ENCODE measurements at regions of chr12 and their contacts with region 1.

Region 1: GRCh38 chr12:14884458-14884878 is 1.2 kb downstream of the MGP start:
- DNase-seq: peak; percentile 65 to 92 (median 85)
- ATAC-seq: peak; percentile 91 to 98 (median 97)
- H3K4me3 ChIP-seq: no peak overlapping the region
- H3K4me3 Mint-ChIP-seq: peak overlapping the region; percentile 46 to 67 (median 57)
- H3K27ac ChIP-seq: no peak overlapping the region
- H3K27ac Mint-ChIP-seq: peak overlapping the region; percentile 41 to 69
- H3K4me1 ChIP-seq: peaks cover 12 to 14% of the 10 kb centered on the region in 2 experiments
- H3K4me1 Mint-ChIP-seq: peaks cover 46 to 52% (median 50%) of the 10 kb centered on the region in 3 donors
- H3K27me3 ChIP-seq: peaks cover 0 to 3% of the 10 kb centered on the region in 2 experiments
- H3K27me3 Mint-ChIP-seq: peaks cover 0 to 14% of the 10 kb centered on the region in 2 donors

Region 2: GRCh38 chr12:14537088-14537487 is 347.4 kb before region 1 on chr12:
- CTCF ChIA-PET with region 1: no interaction called
- POLR2A ChIA-PET with region 1: interaction called in 1 of 2 experiments, 11 read pairs
- DNase-seq: no peak
- ATAC-seq: no peak
- H3K4me3 ChIP-seq: no peak overlapping the region
- H3K4me3 Mint-ChIP-seq: no peak overlapping the region
- H3K27ac ChIP-seq: no peak overlapping the region
- H3K27ac Mint-ChIP-seq: no peak overlapping the region
- H3K4me1 ChIP-seq: no peaks in the 10 kb centered on the region
- H3K4me1 Mint-ChIP-seq: no peaks in the 10 kb centered on the region
- H3K27me3 ChIP-seq: peaks cover 0 to 2% of the 10 kb centered on the region in 2 experiments
- H3K27me3 Mint-ChIP-seq: peaks cover 0 to 3% of the 10 kb centered on the region in 2 donors

Region 3: DNA sequence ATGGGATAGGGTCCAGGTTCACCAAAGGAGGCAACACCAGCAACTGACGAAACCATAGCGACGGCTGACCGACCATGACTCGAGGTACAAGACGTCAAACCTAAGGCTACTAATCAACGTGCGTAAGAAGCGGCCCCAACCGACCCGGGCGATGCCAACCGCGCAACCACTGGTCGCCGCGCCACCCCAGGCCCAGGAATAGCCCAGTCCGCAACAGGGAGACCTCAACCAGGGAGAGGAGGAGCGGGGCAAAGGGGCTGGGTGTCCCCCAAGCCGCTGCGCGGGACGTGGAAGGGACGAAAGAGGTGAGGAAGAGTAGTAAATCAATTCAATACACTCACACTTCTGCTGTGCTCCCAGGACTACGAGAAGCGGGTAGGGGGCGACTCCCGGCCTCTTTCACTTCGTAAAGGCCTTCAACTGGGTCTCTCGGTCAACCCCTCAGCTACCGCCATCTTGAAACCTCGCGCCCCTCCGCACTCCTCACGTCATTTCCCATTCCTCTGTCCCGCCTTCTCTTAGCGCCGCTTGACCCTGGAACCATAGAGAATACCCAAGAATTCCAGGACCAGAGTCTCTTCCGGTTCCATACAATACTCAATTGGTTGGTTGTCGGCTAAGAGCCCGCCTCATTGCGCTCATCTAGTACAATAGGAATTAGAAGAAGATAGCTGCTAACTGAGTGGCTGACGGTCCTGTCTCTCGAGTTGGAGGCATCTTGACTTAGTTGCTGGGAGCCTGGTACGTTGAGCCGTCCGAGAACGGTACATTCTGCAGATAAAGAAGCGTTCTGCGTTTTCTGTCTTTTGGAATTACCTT is 81.2 kb before region 1 on chr12 and contains the starts of genes C12orf60 and WBP11:
- CTCF ChIA-PET with region 1: interaction called in 1 of 2 experiments, 6 read pairs
- POLR2A ChIA-PET with region 1: interaction called in 1 of 2 experiments, 13 read pairs
- DNase-seq: peak; percentile 62 to 96 (median 87)
- ATAC-seq: peak; percentile 95 to 99 (median 96)
- H3K4me3 ChIP-seq: peak within 1 kb of the TSS; percentile 72 to 90
- H3K4me3 Mint-ChIP-seq: no peak within 1 kb of the TSS
- H3K27ac ChIP-seq: peak within 1 kb of the TSS; percentile 93
- H3K27ac Mint-ChIP-seq: no peak within 1 kb of the TSS
- H3K4me1 ChIP-seq: peaks cover 7 to 18% of the 10 kb centered on the region in 2 experiments
- H3K4me1 Mint-ChIP-seq: peaks cover 0 to 24% (median 17%) of the 10 kb centered on the region in 3 donors
- H3K27me3 ChIP-seq: no peaks in the 10 kb centered on the region
- H3K27me3 Mint-ChIP-seq: no peaks in the 10 kb centered on the region
- total RNA-seq, gene C12orf60: 0.50 to 1.4 (median 0.93) TPM in 4 of 5 donors, not detected in the other
- total RNA-seq, gene WBP11: 72.6 to 122 (median 80.6) TPM